ENCODE measurements at regions of chr2 and their contacts with region 1.

Region 1: GRCh38 chr2:38912619-38913018 is 22.9 kb downstream of the ARHGEF33 start:
- DNase-seq: no peak
- H3K4me3 ChIP-seq: no peak overlapping the region
- H3K27ac ChIP-seq: no peak overlapping the region
- H3K4me1 ChIP-seq: no peaks in the 10 kb centered on the region
- H3K27me3 ChIP-seq: no peaks in the 10 kb centered on the region
- CTCF ChIP-seq: no peak
- EP300 ChIP-seq: no peak
- POLR2A ChIP-seq: no peak

Region 2: DNA sequence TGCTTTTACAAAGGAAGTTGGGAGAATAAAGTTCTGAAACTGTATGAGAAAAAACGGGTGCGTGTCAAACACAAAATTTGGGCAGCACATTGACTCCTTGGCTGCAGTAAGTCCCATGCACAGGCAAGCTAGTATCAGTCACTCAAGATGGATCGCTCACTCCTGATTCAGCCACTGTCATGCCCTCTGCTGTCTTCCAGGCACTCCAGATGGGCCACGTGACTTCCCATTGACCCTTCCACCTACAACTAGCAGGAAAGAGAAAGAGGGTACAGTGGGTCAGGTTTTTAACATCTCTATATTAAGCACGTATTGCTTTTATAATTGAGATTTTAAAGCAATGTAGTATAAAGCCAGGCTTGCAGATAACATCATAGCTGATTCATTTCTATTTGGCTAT is 14.4 kb before region 1 on chr2:
- intact Hi-C with region 1: loop called (anchors 1 kb)
- DNase-seq: no peak
- H3K4me3 ChIP-seq: no peak overlapping the region
- H3K27ac ChIP-seq: no peak overlapping the region
- H3K4me1 ChIP-seq: no peaks in the 10 kb centered on the region
- H3K27me3 ChIP-seq: no peaks in the 10 kb centered on the region
- CTCF ChIP-seq: no peak
- EP300 ChIP-seq: no peak
- POLR2A ChIP-seq: no peak

Region 3: GRCh38 chr2:39050109-39050508 is 137.5 kb after region 1 on chr2:
- intact Hi-C with region 1: no loop called
- DNase-seq: no peak
- H3K4me3 ChIP-seq: no peak overlapping the region
- H3K27ac ChIP-seq: no peak overlapping the region
- H3K4me1 ChIP-seq: no peaks in the 10 kb centered on the region
- H3K27me3 ChIP-seq: no peaks in the 10 kb centered on the region
- CTCF ChIP-seq: no peak
- EP300 ChIP-seq: no peak
- POLR2A ChIP-seq: no peak